ENCODE measurements at regions of chr22 and their contacts with region 1.

Region 1: DNA sequence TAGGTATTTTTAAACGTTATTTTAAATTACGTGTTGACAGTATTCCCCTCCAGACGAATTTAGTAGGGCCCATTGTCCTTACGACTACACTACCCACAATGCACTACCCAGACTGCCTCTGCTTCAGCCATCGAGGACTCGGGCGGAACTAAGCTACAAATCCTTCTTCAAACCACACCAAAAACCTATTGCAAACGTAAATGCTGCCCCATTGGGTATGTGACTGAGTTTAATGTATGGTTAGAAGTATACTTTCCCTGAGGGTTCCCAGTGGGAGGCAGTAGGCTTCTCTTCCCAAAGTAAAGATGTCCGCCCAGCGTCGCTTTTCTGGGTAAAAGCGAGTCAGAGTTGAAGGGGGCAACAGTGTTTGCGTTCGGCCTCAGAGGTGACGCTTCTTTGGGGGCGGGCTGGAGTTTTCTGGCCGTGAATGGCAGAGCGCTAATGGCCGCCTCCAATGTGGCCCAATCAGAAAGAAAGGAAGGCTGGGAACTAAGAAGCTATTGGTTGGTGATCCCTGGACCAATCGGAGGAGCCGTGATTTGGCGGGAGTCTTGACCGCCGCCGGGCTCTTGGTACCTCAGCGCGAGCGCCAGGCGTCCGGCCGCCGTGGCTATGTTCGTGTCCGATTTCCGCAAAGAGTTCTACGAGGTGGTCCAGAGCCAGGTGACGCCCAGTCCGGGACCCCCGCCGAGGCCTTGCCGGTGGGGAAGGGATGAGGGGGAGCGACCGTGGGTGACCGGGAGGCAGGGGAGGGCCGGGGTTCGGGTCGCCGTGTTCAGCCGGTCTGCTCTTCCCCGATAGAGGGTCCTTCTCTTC is at the start of gene CDC45:
- DNase-seq: peak; percentile 93
- ATAC-seq: peak; percentile 95
- H3K4me3 ChIP-seq: peak within 1 kb of the TSS; percentile 97
- H3K27ac ChIP-seq: peak within 1 kb of the TSS; percentile 97
- H3K4me1 ChIP-seq: no peaks in the 10 kb centered on the region
- H3K27me3 ChIP-seq: no peaks in the 10 kb centered on the region
- CTCF ChIP-seq: no peak
- EP300 ChIP-seq: no peak
- POLR2A ChIP-seq: peak; percentile 80
- RAD21 ChIP-seq: no peak
- polyA plus RNA-seq, gene CDC45: 42.8 to 51.2 TPM

Region 2: DNA sequence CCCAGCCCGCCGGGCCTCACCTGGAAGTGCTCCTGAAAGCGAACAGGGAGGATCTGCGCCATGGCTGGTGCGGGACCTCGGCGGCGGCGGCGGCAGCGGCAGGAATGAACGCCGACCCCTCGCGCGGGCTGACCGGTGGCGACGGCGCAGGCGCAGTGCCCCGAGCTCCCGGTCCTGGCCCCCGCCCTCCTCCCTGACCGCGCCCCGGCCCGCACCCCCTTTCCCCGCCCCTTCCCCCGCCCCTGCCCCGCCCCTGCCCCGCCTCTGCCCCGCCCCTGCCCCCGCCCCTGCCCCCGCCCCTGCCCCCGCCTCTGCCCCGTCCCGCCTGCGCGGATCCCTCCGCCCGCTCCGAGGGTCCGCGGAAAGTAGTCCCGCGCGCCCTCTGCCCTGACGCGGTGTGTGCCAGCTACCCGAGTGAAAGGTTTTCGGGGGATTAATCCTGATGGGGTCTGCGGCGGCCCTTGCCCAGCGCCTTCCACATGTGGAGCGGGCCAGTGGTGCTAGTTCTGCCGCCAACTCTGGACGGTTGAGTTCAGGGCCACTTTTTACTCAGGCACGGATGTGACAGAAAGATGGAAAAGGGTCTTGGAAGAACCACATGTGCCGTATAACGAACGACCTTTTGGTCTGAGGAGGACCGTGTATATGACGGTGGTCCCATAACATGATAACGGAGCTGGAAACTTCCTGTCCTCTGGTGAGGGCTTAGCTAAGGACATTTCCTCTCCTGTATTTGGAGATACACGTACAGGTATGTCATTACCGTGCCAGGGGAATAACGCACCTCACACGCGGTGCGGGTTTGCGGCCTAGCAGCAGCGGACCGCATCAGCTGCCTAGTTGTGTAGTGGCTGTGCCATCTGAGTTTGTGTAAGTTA is 187.7 kb before region 1 on chr22 and contains the start of gene CLTCL1:
- CTCF ChIA-PET with region 1: interaction called, 4 read pairs
- POLR2A ChIA-PET with region 1: interaction called, 3 read pairs
- RAD21 ChIA-PET with region 1: interaction called, 4 read pairs
- SMC1A ChIA-PET with region 1: interaction called, 5 read pairs
- in situ Hi-C with region 1: no loop called
- intact Hi-C with region 1: loop called (anchors 10 kb)
- DNase-seq: peak; percentile 21
- ATAC-seq: peak; percentile 82
- H3K4me3 ChIP-seq: peak within 1 kb of the TSS; percentile 96
- H3K27ac ChIP-seq: peak within 1 kb of the TSS; percentile 34; the same call in 1 of the 2 replicates
- H3K4me1 ChIP-seq: peaks cover 9% of the 10 kb centered on the region
- H3K27me3 ChIP-seq: peaks cover 7 to 15% of the 10 kb centered on the region in 2 experiments
- CTCF ChIP-seq: no peak
- EP300 ChIP-seq: no peak
- POLR2A ChIP-seq: peak; percentile 58
- RAD21 ChIP-seq: no peak
- polyA plus RNA-seq, gene CLTCL1: 0.04 TPM in 1 of 2 experiments, not detected in the other

Region 3: DNA sequence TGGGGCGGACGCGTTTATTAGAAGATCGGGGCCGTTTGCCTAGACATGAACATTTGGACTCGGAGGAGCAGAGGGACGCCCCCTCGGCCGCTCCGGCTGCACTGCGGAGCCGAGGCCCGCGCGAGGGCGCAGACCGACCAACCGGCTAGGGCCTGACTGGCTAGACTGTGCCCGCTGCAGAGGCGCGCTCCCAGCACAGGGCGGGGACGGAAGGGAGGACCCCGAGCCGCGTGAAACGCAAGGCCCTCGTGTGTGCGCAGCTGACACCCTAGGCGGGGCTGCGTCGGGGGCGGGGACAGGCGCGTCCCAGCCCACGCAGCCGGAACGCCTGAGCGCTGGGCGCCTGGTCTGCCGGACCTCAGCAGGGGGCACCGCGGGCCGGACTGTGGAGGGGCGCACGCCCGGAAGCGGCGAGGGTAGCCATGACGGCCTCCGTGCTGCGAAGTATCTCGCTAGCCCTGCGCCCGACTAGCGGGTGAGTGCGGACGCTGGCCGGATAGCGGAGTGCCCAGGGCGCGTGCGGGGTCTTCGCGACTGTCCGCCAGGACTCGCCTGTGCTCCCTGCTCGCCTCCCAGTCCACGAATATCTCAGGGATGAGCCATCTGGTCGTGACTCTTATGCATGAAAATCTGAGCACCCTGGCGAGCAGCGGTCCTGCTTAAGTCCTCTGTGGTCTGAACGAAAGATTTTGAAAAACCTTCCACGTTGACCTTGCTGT is 47.3 kb before region 1 on chr22 and contains the start of gene MRPL40:
- CTCF ChIA-PET with region 1: interaction called, 5 read pairs
- POLR2A ChIA-PET with region 1: interaction called, 3 read pairs
- RAD21 ChIA-PET with region 1: interaction called, 11 read pairs
- SMC1A ChIA-PET with region 1: interaction called, 4 read pairs
- in situ Hi-C with region 1: no loop called
- intact Hi-C with region 1: loop called (anchors 1 kb)
- DNase-seq: peak; percentile 76
- ATAC-seq: peak; percentile 93
- H3K4me3 ChIP-seq: peak within 1 kb of the TSS; percentile 94
- H3K27ac ChIP-seq: peak within 1 kb of the TSS; percentile 93
- H3K4me1 ChIP-seq: no peaks in the 10 kb centered on the region
- H3K27me3 ChIP-seq: no peaks in the 10 kb centered on the region
- CTCF ChIP-seq: 0 out of 6 replicates have a peak, but pooled peaks of 1 of the 3 experiments have one; percentile 4
- EP300 ChIP-seq: peak in 1 of 2 experiments; percentile 16; a peak in 2 of 4 replicates
- POLR2A ChIP-seq: peak; percentile 93
- RAD21 ChIP-seq: no peak
- polyA plus RNA-seq, gene MRPL40: 180 to 207 TPM

Region 4: DNA sequence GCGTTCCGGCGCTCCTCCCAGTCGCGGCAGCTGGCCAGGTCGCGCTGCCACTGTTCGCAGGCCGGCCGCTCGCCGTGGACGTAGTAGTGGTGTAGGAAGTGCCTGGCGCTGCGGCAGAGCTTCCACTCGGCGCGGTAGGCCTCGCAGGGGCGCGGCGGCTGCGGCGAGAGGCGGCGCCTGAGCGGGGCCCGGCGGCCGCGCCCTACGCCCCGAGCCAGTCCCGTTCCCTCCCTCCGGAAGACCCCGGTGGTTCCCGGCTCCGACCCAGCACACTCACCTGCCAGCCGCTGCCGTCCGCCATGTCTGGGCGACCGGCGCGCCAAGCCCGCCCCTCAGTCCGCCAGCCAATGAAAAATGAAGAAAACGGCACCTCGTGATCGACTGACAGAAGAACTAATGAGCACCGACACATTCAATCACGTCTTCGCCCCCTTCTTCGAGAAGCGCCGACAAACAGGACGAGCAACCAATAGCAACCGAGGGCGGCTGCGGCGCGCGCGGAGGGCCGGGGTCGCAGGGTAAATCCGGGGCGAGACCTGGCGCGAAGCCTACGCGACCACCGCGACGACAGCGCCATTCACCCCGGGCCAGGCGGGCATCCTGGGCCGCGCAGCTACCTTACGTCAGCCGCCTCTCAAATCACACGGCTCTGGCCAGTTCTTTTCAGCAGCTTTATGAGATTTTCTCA is 32.0 kb before region 1 on chr22 and contains the start of gene C22orf39:
- CTCF ChIA-PET with region 1: interaction called, 10 read pairs
- POLR2A ChIA-PET with region 1: interaction called, 4 read pairs
- RAD21 ChIA-PET with region 1: interaction called, 4 read pairs
- SMC1A ChIA-PET with region 1: interaction called, 6 read pairs
- in situ Hi-C with region 1: no loop called
- intact Hi-C with region 1: loop called (anchors 2 kb)
- DNase-seq: peak; percentile 67
- ATAC-seq: peak; percentile 92
- H3K4me3 ChIP-seq: peak within 1 kb of the TSS; percentile 95
- H3K27ac ChIP-seq: peak within 1 kb of the TSS; percentile 85
- H3K4me1 ChIP-seq: peaks cover 17% of the 10 kb centered on the region
- H3K27me3 ChIP-seq: no peaks in the 10 kb centered on the region
- CTCF ChIP-seq: no peak
- EP300 ChIP-seq: no peak
- POLR2A ChIP-seq: peak; percentile 92
- RAD21 ChIP-seq: no peak
- polyA plus RNA-seq, gene C22orf39: 6.7 to 10.9 TPM

Measured in GM12878 (cell line).